Activated T-helper 1 cell treated with anti-CD3 and anti-CD28 coated beads, Interleukin-12 subunit alpha, Interleukin-12 subunit beta, Interleukin-2, Interleukin-4 antibody, amounts not matched to agents 30 ng/mL and 10 ng/mL and 1 ng/mL, durations not matched to agents 14 hours and 24 hours and 36 hours (primary cell): ENCODE measurements at regions of chr16 and their contacts with region 1.

Region 1: GRCh38 chr16:79628501-79628975 is 28.0 kb upstream of the MAF start:
- DNase-seq: peak; percentile 77
- H3K4me3 Mint-ChIP-seq: peak overlapping the region; percentile 68
- H3K27ac Mint-ChIP-seq: peak overlapping the region; percentile 93
- H3K4me1 Mint-ChIP-seq: peaks cover 77% of the 10 kb centered on the region
- H3K27me3 Mint-ChIP-seq: peaks cover 8% of the 10 kb centered on the region

Region 2: GRCh38 chr16:78742501-78743283 is 885.8 kb before region 1 on chr16:
- intact Hi-C with region 1: loop called (anchors 1 kb)
- DNase-seq: peak; percentile 70
- H3K4me3 Mint-ChIP-seq: peak overlapping the region; percentile 74
- H3K27ac Mint-ChIP-seq: peak overlapping the region; percentile 77
- H3K4me1 Mint-ChIP-seq: peaks cover 33% of the 10 kb centered on the region
- H3K27me3 Mint-ChIP-seq: peaks cover 10% of the 10 kb centered on the region

Region 3: GRCh38 chr16:79089735-79090284 is 538.7 kb before region 1 on chr16:
- intact Hi-C with region 1: loop called (anchors 1 kb)
- DNase-seq: peak; percentile 66
- H3K4me3 Mint-ChIP-seq: peak overlapping the region; percentile 62
- H3K27ac Mint-ChIP-seq: peak overlapping the region; percentile 95
- H3K4me1 Mint-ChIP-seq: peaks cover 53% of the 10 kb centered on the region
- H3K27me3 Mint-ChIP-seq: no peaks in the 10 kb centered on the region

Region 4: DNA sequence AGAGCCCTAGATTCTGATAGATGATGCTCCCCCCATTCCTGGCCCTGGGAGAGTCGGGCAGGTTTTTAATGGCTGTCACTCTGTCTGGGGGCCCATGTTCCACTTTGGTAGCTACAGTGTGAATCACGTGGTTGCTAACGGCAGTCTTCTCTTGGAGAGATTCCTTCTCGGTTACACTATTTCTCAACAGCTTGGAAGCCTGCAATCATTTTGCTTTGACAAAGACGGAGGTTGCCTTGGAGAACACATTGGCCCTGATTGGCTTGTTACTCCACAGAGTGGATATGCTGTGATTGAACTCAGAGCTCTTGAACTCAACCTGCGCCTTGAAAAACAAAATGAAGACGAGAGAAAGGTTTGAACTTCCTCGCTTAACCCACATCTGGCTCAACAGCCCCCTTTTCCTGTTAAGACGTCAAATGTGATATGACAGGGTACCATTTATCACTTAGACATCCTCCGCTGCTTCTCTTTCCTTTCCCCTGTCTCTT is 246.9 kb before region 1 on chr16:
- intact Hi-C with region 1: no loop called
- DNase-seq: no peak
- H3K4me3 Mint-ChIP-seq: no peak overlapping the region
- H3K27ac Mint-ChIP-seq: no peak overlapping the region
- H3K4me1 Mint-ChIP-seq: peaks cover 18% of the 10 kb centered on the region
- H3K27me3 Mint-ChIP-seq: peaks cover 17% of the 10 kb centered on the region

Region 5: GRCh38 chr16:79497606-79498350 is 130.8 kb before region 1 on chr16:
- intact Hi-C with region 1: no loop called
- DNase-seq: no peak
- H3K4me3 Mint-ChIP-seq: no peak overlapping the region
- H3K27ac Mint-ChIP-seq: no peak overlapping the region
- H3K4me1 Mint-ChIP-seq: no peaks in the 10 kb centered on the region
- H3K27me3 Mint-ChIP-seq: no peaks in the 10 kb centered on the region

Region 6: GRCh38 chr16:79613009-79613408 is 15.5 kb before region 1 on chr16:
- intact Hi-C with region 1: loop called (anchors 2 kb)
- DNase-seq: no peak
- H3K4me3 Mint-ChIP-seq: peak overlapping the region; percentile 6
- H3K27ac Mint-ChIP-seq: no peak overlapping the region
- H3K4me1 Mint-ChIP-seq: peaks cover 50% of the 10 kb centered on the region
- H3K27me3 Mint-ChIP-seq: no peaks in the 10 kb centered on the region

Region 7: DNA sequence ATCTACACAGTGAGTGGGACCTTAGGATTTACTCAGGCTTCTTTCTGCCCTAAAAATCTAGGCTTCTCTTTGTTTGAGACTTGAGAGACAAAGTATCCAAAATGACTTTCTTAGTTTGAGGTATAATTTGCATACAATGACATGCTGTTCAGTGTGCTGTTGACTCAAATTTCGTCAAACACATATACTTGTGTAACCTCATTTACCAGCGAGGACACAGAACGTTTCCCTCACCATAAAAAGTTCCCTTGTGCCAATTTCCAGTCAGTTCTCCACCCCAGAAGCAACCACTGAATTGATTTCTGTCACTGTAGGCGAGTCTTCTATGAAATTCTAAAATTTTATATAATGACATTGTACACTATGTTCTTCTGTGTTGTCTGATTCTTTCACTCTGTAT is 40.0 kb after region 1 on chr16:
- intact Hi-C with region 1: loop called (anchors 1 kb)
- DNase-seq: no peak
- H3K4me3 Mint-ChIP-seq: no peak overlapping the region
- H3K27ac Mint-ChIP-seq: no peak overlapping the region
- H3K4me1 Mint-ChIP-seq: peaks cover 7% of the 10 kb centered on the region
- H3K27me3 Mint-ChIP-seq: peaks cover 6% of the 10 kb centered on the region

Region 8: DNA sequence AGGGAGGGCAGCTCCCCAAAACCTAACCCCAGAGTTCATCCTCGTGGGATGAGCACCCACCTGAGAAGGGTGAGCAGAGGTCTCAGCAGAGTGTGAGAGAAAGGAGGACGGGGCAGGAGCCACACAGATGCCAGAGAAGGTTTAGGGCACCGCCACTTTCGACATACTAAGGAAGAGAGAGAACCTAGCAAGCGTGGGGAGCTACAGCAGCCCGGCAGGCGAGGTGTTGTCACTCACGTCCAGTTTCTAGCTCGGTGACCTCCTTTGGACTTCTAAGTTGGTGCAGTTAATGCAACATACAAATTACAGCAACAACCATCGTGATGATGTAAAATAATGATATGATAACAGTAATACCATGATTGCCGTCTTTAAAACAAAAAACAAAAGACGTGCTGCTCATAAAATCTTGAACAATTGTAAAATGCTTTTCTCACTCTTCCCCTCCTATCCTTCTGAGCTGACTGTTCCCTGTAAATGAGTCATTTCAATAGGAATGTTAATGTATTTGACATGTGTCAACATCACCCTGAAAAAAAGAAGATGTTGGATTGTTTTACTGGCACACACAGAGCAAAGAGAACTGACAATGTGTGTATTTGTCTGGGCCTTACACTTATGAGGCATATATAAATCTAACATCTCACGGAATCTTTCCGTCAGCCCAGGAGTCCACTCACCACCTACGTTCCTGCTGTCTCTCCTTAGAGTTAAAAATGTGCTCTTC is 130.2 kb after region 1 on chr16:
- intact Hi-C with region 1: loop called (anchors 2 kb)
- DNase-seq: no peak
- H3K4me3 Mint-ChIP-seq: no peak overlapping the region
- H3K27ac Mint-ChIP-seq: no peak overlapping the region
- H3K4me1 Mint-ChIP-seq: peaks cover 37% of the 10 kb centered on the region
- H3K27me3 Mint-ChIP-seq: peaks cover 2% of the 10 kb centered on the region